ENCODE measurements at regions of chr6 and their contacts with region 1.

Region 1: GRCh38 chr6:133568970-133569889 is 319.7 kb upstream of the TCF21 start:
- DNase-seq: peak; percentile 67
- H3K4me3 ChIP-seq: peak overlapping the region; percentile 27
- H3K27ac ChIP-seq: no peak overlapping the region
- H3K4me1 ChIP-seq: peaks cover 3% of the 10 kb centered on the region
- H3K27me3 ChIP-seq: peaks cover 90% of the 10 kb centered on the region
- CTCF ChIP-seq: peak; percentile 94

Region 2: DNA sequence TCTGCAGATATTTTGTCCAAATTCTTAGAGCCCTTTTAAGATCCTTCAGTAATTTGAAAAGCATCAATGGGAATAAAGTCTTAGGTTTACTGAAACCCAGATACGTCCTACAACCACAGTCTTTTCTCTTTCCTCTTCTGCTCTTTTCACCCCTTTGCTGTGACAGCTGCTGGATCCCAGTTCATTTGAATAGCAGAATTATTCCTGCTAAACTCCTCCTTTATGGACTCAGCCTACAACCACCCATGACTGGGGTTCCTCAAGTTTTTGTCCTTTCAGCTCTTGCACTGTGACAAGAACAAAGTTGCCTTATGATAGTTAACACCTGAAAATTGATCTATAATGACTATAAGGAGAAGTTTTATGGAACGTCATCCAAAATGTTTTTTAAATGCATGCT is 90.6 kb before region 1 on chr6:
- CTCF ChIA-PET with region 1: no interaction called
- POLR2A ChIA-PET with region 1: no interaction called
- intact Hi-C with region 1: no loop called
- DNase-seq: no peak
- H3K4me3 ChIP-seq: no peak overlapping the region
- H3K27ac ChIP-seq: no peak overlapping the region
- H3K4me1 ChIP-seq: no peaks in the 10 kb centered on the region
- H3K27me3 ChIP-seq: no peaks in the 10 kb centered on the region
- CTCF ChIP-seq: no peak

Region 3: DNA sequence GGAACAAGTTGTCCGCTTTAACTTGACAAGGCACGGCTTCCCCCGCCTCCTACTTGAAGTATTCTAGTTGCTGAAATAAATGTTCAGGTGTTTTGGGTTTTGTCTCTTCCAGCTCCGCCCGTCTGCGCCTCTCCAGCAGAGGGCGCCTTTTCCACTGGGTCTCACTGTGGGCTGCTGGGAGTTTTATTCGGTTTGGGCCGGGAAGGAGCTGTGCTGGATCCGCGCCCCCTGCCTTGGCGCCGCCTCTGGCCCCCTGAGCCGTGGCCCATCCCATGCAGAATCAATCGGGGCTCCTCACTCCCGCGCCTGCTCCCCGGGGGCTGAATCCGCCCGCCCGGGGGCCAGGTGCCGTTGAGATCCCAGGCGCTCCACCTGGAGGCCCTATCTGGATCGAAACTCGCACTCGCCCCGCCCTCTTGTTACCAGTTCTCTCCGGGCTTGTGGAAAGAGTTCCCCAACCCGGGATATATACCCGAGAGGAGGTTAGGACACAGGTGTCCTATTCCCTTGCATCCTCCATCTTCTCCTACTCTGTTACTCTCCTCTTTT is 268.6 kb after region 1 on chr6:
- CTCF ChIA-PET with region 1: interaction called, 5 read pairs
- POLR2A ChIA-PET with region 1: no interaction called
- intact Hi-C with region 1: loop called (anchors 5 kb)
- DNase-seq: peak; percentile 68
- H3K4me3 ChIP-seq: peak overlapping the region; percentile 37
- H3K27ac ChIP-seq: no peak overlapping the region
- H3K4me1 ChIP-seq: no peaks in the 10 kb centered on the region
- H3K27me3 ChIP-seq: peaks cover 54% of the 10 kb centered on the region
- CTCF ChIP-seq: peak; percentile 87

Region 4: GRCh38 chr6:134002821-134003220 is 433.6 kb after region 1 on chr6:
- CTCF ChIA-PET with region 1: no interaction called
- POLR2A ChIA-PET with region 1: no interaction called
- intact Hi-C with region 1: no loop called
- DNase-seq: no peak
- H3K4me3 ChIP-seq: no peak overlapping the region
- H3K27ac ChIP-seq: no peak overlapping the region
- H3K4me1 ChIP-seq: no peaks in the 10 kb centered on the region
- H3K27me3 ChIP-seq: peaks cover 3% of the 10 kb centered on the region
- CTCF ChIP-seq: no peak

Measured in A673 (cell line).